GM13976 (cell line): ENCODE measurements at regions of chr10 and their contacts with region 1.

Region 1: GRCh38 chr10:29998142-29998808 is 61.1 kb downstream of the JCAD start:
- DNase-seq: peak; percentile 80
- CTCF ChIP-seq: peak; percentile 95

Region 2: GRCh38 chr10:30247704-30248103 is 249.4 kb after region 1 on chr10:
- in situ Hi-C with region 1: loop called (anchors 25 kb)
- DNase-seq: no peak
- CTCF ChIP-seq: no peak

Region 3: DNA sequence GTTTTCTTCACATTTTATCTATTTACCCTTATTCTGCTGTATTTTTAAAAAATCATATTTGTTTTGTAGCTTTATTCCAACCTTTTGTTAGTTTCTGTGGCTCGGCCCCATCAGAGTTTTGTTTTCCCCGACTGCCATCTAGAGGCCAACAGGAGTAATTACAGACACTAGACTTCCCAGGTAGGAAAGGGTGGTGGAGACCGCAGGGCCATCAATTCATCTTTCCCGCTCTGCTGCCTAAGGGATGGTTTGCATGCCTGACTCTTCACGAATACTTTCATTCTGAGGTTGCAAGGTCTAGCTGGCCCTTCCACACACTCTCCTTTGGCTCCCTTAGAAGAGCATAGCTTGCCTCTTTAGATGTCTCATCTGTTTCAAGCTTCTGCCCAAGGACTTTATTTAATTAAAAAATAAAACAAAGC is 593.0 kb after region 1 on chr10:
- in situ Hi-C with region 1: loop called (anchors 25 kb)
- DNase-seq: peak; percentile 37
- CTCF ChIP-seq: peak; percentile 68